Caco-2 (cell line): ENCODE measurements at regions of chr9 and their contacts with region 1.

Region 1: DNA sequence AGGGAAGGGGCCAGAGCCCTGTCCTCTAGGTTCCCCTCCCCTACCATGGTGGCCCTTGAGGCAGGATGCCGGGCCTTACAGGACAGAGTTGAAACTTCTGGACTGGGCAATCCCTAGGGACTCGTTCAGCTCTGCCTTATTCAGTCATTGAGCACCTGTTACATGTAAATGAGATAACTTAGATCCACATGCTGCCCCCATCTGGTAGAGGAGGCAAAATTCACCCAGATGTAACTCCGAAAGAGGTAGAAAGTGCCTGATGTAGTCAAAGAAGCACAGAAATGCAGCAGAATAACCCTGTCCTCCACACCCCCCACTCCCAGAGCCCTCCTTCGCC is 1.5 kb downstream of the GGTA1 start:
- DNase-seq: peak; percentile 77 to 78
- H3K4me3 ChIP-seq: no peak overlapping the region
- H3K4me3 Mint-ChIP-seq: peak overlapping the region; percentile 69
- H3K27ac Mint-ChIP-seq: no peak overlapping the region
- H3K4me1 ChIP-seq: peaks cover 7% of the 10 kb centered on the region; the same call in 1 of the 2 replicates
- H3K4me1 Mint-ChIP-seq: peaks cover 9% of the 10 kb centered on the region
- H3K27me3 ChIP-seq: peaks cover 3% of the 10 kb centered on the region
- H3K27me3 Mint-ChIP-seq: peaks cover 29% of the 10 kb centered on the region
- CTCF ChIP-seq: peak; percentile 66 to 74

Region 2: GRCh38 chr9:121463026-121463807 is 34.9 kb before region 1 on chr9:
- CTCF ChIA-PET with region 1: interaction called, 5 read pairs
- POLR2A ChIA-PET with region 1: no interaction called
- intact Hi-C with region 1: loop called (anchors 1 kb)
- DNase-seq: peak; percentile 46 to 57
- H3K4me3 ChIP-seq: no peak overlapping the region
- H3K4me3 Mint-ChIP-seq: no peak overlapping the region
- H3K27ac Mint-ChIP-seq: no peak overlapping the region
- H3K4me1 ChIP-seq: no peaks in the 10 kb centered on the region
- H3K4me1 Mint-ChIP-seq: no peaks in the 10 kb centered on the region
- H3K27me3 ChIP-seq: no peaks in the 10 kb centered on the region
- H3K27me3 Mint-ChIP-seq: peaks cover 22% of the 10 kb centered on the region
- CTCF ChIP-seq: peak; percentile 54 to 72

Region 3: GRCh38 chr9:121474231-121474891 is 23.8 kb before region 1 on chr9:
- CTCF ChIA-PET with region 1: no interaction called
- POLR2A ChIA-PET with region 1: no interaction called
- intact Hi-C with region 1: no loop called
- DNase-seq: no peak
- H3K4me3 ChIP-seq: no peak overlapping the region
- H3K4me3 Mint-ChIP-seq: no peak overlapping the region
- H3K27ac Mint-ChIP-seq: no peak overlapping the region
- H3K4me1 ChIP-seq: no peaks in the 10 kb centered on the region
- H3K4me1 Mint-ChIP-seq: no peaks in the 10 kb centered on the region
- H3K27me3 ChIP-seq: 0 out of 2 replicates have a peak, but pooled peaks cover 1% of the 10 kb centered on the region
- H3K27me3 Mint-ChIP-seq: peaks cover 11% of the 10 kb centered on the region
- CTCF ChIP-seq: no peak